WTC11 (cell line): ENCODE measurements at regions of chr5 and their contacts with region 1.

Region 1: DNA sequence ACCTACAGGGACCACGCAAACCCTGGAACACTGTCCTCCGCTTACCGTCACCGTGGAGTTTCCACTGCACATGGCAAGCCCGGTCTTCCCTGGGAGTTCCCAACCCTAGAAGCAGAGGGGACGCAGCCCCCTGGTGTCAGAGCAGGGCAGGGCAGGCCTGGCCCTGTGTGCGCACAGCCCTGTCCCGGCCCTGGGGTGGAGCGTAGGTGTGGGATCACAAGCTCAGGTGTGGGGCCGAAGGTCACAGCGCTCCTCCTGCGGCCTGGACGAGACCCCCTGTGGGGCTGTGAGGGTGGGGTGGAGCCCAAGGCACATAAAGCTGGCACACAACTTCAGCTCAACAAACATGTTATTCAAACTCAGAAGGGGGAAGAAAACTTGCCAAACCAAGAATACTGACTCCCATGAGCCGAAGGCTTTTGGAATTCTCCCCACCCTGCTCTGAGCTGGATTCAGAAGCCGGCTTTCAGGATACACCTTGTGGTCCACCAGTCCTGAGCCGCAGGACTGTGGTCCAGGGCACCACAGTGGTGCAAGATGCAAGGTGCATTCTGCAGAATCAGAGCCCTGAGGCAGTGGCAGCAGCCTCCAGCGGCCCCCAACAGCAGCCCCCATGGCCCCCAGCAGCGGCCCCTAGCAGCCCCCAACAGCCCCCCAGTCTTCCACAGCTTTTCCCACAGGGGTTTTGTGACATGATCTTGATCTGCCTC is 11.8 kb upstream of the EXOC3 start:
- DNase-seq: peak; percentile 90
- ATAC-seq: peak; percentile 97
- H3K4me3 Mint-ChIP-seq: no peak overlapping the region
- H3K27ac Mint-ChIP-seq: peak overlapping the region; percentile 60; the same call in 1 of the 2 replicates
- H3K4me1 Mint-ChIP-seq: peaks cover 4% of the 10 kb centered on the region; the same call in 1 of the 2 replicates
- H3K27me3 Mint-ChIP-seq: no peaks in the 10 kb centered on the region
- CTCF ChIP-seq: peak; percentile 77

Region 2: GRCh38 chr5:317086-317811 is 113.9 kb before region 1 on chr5:
- CTCF ChIA-PET with region 1: interaction called, 48 read pairs
- POLR2A ChIA-PET with region 1: interaction called, 3 read pairs
- DNase-seq: peak; percentile 82
- ATAC-seq: peak; percentile 80
- H3K4me3 Mint-ChIP-seq: no peak overlapping the region
- H3K27ac Mint-ChIP-seq: no peak overlapping the region
- H3K4me1 Mint-ChIP-seq: peaks cover 6% of the 10 kb centered on the region
- H3K27me3 Mint-ChIP-seq: peaks cover 34% of the 10 kb centered on the region
- CTCF ChIP-seq: peak; percentile 48; the same call in 1 of the 2 replicates

Region 3: GRCh38 chr5:399296-400281 is 31.6 kb before region 1 on chr5:
- CTCF ChIA-PET with region 1: interaction called, 16 read pairs
- POLR2A ChIA-PET with region 1: no interaction called
- DNase-seq: peak; percentile 89
- ATAC-seq: peak; percentile 75
- H3K4me3 Mint-ChIP-seq: peak overlapping the region; percentile 44
- H3K27ac Mint-ChIP-seq: peak overlapping the region; percentile 26; the same call in 1 of the 2 replicates
- H3K4me1 Mint-ChIP-seq: peaks cover 12% of the 10 kb centered on the region
- H3K27me3 Mint-ChIP-seq: peaks cover 19% of the 10 kb centered on the region
- CTCF ChIP-seq: no peak

Region 4: DNA sequence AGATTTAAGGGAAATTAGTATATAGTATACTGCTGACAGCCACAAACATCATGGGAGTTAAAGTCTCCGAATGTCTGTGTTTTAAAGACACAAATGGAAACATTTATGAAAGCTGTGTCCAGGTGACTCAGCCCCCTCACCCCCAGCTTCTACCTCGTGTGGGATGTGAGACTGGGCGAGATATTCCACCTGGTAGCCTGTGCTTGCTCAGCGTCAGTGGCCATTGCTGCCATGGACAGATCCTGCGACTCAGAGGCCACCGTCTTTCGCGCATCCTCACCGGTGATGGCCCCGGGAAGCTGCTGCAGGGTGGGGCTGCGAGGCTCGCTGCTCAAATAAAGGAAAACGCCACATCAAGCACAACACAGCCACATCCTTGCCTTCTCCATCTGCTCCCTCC is 19.4 kb before region 1 on chr5:
- CTCF ChIA-PET with region 1: interaction called, 73 read pairs
- POLR2A ChIA-PET with region 1: interaction called, 3 read pairs
- DNase-seq: peak; percentile 18
- ATAC-seq: no peak
- H3K4me3 Mint-ChIP-seq: no peak overlapping the region
- H3K27ac Mint-ChIP-seq: no peak overlapping the region
- H3K4me1 Mint-ChIP-seq: peaks cover 15% of the 10 kb centered on the region
- H3K27me3 Mint-ChIP-seq: no peaks in the 10 kb centered on the region
- CTCF ChIP-seq: no peak

Region 5: GRCh38 chr5:446864-447263 is 15.7 kb after region 1 on chr5:
- CTCF ChIA-PET with region 1: interaction called, 33 read pairs
- POLR2A ChIA-PET with region 1: no interaction called
- DNase-seq: peak; percentile 13
- ATAC-seq: peak; percentile 26; the same call in 1 of the 2 replicates
- H3K4me3 Mint-ChIP-seq: no peak overlapping the region
- H3K27ac Mint-ChIP-seq: no peak overlapping the region
- H3K4me1 Mint-ChIP-seq: peaks cover 14% of the 10 kb centered on the region
- H3K27me3 Mint-ChIP-seq: peaks cover under 1% of the 10 kb centered on the region
- CTCF ChIP-seq: peak; percentile 41; the same call in 1 of the 2 replicates

Region 6: DNA sequence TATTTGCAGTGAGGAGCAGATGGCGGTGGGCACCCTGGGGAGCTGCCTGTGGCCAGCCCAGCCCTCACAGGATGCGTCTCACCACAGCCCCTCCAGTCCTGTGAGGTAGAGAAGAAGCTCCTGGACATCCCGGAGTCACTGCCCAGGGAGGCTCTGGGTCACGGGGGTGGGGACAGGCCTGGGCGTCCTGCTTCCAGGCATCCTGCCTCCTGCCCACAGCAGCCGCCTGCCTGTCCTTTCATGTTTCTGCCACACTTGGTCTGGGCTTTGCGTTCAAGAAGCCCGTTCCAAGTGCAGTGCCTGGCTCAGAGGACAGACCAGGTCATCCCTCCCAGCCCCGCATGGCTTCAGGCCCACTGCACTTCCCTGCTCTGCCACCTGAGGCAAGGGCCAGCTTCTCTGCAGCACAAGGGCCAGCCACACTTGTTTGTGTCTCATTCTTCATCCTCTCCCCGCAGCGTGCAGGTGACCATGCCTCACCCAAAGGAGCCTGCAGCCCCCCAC is 315.2 kb after region 1 on chr5:
- CTCF ChIA-PET with region 1: no interaction called
- POLR2A ChIA-PET with region 1: no interaction called
- DNase-seq: peak; percentile 58
- ATAC-seq: peak; percentile 94
- H3K4me3 Mint-ChIP-seq: no peak overlapping the region
- H3K27ac Mint-ChIP-seq: no peak overlapping the region
- H3K4me1 Mint-ChIP-seq: no peaks in the 10 kb centered on the region
- H3K27me3 Mint-ChIP-seq: no peaks in the 10 kb centered on the region
- CTCF ChIP-seq: no peak